Endothelial cell of umbilical vein (primary cell): ENCODE measurements at regions of chr3 and their contacts with region 1.

Region 1: DNA sequence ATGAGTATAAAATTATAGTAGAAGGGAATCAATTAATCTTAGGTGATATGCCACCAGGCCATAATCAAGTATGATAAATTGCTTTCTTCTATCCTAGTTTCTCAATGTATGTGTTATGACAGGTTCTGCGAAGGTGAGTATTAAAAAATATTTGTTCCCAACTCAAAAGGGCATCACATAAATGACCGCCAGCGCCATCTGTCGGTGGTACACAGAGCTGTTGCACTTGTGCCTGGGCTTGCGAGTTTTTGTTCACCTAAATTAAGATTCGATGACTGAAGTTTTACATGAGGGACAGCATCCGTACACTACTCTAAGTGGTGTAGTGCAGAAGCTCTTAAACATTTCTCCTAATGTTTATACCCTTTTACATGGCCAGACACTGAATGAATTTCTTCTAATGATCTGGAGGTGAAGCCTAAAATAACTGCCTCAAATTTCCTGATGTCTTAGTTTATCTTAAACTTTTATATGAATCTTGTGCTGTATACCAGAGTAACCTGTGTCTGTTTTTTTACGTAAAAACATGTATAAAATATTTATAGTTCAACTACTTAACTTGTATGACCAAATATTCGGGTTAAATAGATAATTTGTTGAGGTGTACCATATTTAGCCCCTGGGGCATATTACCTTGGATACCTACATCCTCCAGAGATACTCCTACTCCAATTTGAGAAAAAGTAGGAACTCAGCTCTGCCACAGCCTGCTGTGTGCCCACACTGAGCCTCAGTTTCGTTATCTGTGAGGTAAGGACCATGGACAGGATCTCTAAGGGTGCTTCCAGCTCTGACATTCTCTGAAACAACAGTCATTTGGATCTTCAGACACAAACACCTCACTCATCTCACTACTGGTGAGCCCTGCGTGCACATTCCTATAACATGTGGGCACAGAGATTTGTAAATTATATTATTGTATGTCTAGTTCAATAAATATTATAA is 365.6 kb downstream of the MAGI1 start:
- DNase-seq: peak; percentile 50
- H3K4me3 ChIP-seq: no peak overlapping the region
- H3K27ac ChIP-seq: no peak overlapping the region
- H3K4me1 ChIP-seq: no peaks in the 10 kb centered on the region
- H3K27me3 ChIP-seq: no peaks in the 10 kb centered on the region
- CTCF ChIP-seq: peak; percentile 73 to 85
- POLR2A ChIP-seq: no peak

Region 2: DNA sequence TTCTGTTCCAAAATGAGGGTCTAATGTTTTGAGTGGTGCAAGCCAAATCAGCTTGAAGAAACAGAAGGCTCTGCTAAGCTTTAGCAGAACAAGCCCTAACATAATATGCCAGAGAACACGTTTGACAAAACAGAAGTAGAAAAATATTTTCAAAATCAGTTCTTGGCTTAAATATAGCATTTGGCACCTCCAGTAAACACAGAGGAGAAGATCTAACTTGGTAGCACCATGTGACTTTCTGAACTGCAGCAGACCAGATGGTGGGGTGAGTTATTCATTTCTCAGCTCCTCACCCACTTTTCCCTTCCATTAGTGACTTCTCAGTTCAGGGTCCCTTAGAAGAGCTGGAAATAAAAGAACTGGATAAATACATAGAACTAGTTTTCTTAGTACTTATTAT is 30.3 kb before region 1 on chr3:
- CTCF ChIA-PET with region 1: interaction called, 12 read pairs
- POLR2A ChIA-PET with region 1: no interaction called
- dilution Hi-C with region 1: no loop called
- intact Hi-C with region 1: no loop called
- DNase-seq: no peak
- H3K4me3 ChIP-seq: no peak overlapping the region
- H3K27ac ChIP-seq: no peak overlapping the region
- H3K4me1 ChIP-seq: no peaks in the 10 kb centered on the region
- H3K27me3 ChIP-seq: no peaks in the 10 kb centered on the region
- CTCF ChIP-seq: no peak
- POLR2A ChIP-seq: no peak

Region 3: DNA sequence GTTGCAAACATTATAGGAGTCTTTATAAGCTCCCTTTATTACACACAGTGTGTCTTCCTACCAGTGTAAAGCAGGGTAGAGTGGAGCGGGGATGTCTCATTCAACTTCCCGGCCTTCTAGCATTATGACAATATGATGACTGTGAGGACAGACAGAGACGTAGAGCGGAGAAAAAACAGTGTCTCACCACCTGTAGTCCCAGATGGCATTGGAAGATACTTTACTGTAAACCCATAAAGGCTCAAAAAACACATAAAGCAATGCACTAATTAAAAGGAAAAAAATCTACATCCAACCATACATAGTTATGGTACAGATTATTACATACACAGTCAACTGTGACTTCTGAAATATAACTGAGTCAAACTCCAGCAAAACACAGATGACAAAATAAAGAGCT is 18.1 kb before region 1 on chr3:
- CTCF ChIA-PET with region 1: interaction called, 11 read pairs
- POLR2A ChIA-PET with region 1: no interaction called
- dilution Hi-C with region 1: no loop called
- intact Hi-C with region 1: no loop called
- DNase-seq: no peak
- H3K4me3 ChIP-seq: no peak overlapping the region
- H3K27ac ChIP-seq: no peak overlapping the region
- H3K4me1 ChIP-seq: no peaks in the 10 kb centered on the region
- H3K27me3 ChIP-seq: no peaks in the 10 kb centered on the region
- CTCF ChIP-seq: no peak
- POLR2A ChIP-seq: no peak

Region 4: DNA sequence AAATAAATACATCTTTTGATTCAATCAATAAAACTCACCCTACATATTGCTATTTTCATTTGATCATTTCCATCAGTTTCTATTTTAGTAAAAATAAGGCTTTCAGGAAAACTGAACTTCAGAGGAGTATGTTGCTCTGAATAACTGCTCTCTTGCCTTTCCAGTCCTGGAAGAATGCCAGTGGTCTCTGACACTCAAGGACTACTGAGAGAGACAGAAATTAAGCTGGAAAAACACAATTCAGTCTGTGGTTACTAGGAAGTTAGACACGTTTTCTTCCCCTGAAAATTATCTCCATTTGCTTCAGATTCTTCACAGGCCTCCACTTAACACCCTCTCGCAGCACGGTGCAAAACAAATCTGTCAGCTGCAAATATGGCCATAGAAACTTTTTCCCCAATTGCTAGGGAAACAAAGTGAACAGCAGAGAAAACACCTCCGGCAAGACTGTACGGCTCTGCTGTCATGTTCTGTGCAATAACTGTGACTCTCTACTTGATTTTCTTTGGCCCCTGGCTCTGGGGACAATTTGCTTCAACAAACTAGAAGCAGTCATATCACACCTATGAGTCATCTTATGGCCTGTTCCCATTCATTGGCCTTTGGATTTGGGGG is 12.6 kb after region 1 on chr3:
- CTCF ChIA-PET with region 1: interaction called, 28 read pairs
- POLR2A ChIA-PET with region 1: no interaction called
- dilution Hi-C with region 1: no loop called
- intact Hi-C with region 1: no loop called
- DNase-seq: peak; percentile 26
- H3K4me3 ChIP-seq: no peak overlapping the region
- H3K27ac ChIP-seq: no peak overlapping the region
- H3K4me1 ChIP-seq: no peaks in the 10 kb centered on the region
- H3K27me3 ChIP-seq: no peaks in the 10 kb centered on the region
- CTCF ChIP-seq: no peak
- POLR2A ChIP-seq: no peak

Region 5: GRCh38 chr3:65732051-65732935 is 59.1 kb after region 1 on chr3:
- CTCF ChIA-PET with region 1: interaction called, 15 read pairs
- POLR2A ChIA-PET with region 1: no interaction called
- dilution Hi-C with region 1: no loop called
- intact Hi-C with region 1: loop called (anchors 5 kb)
- DNase-seq: peak; percentile 73
- H3K4me3 ChIP-seq: no peak overlapping the region
- H3K27ac ChIP-seq: no peak overlapping the region
- H3K4me1 ChIP-seq: no peaks in the 10 kb centered on the region
- H3K27me3 ChIP-seq: no peaks in the 10 kb centered on the region
- CTCF ChIP-seq: peak; percentile 71 to 74
- POLR2A ChIP-seq: no peak